ENCODE measurements at regions of chr12 and their contacts with region 1.

Region 1: GRCh38 chr12:114166362-114166761 is 200.2 kb upstream of the RBM19 start:
- DNase-seq: no peak
- H3K4me3 ChIP-seq: no peak overlapping the region
- CTCF ChIP-seq: peak; percentile 22

Region 2: GRCh38 chr12:114152066-114152465 is 14.3 kb before region 1 on chr12:
- CTCF ChIA-PET with region 1: no interaction called
- POLR2A ChIA-PET with region 1: no interaction called
- DNase-seq: no peak
- H3K4me3 ChIP-seq: no peak overlapping the region
- CTCF ChIP-seq: no peak

Region 3: GRCh38 chr12:114476159-114476558 is 309.8 kb after region 1 on chr12:
- CTCF ChIA-PET with region 1: interaction called, 31 read pairs
- POLR2A ChIA-PET with region 1: no interaction called
- DNase-seq: no peak
- H3K4me3 ChIP-seq: no peak overlapping the region
- CTCF ChIP-seq: no peak

Measured in AG04449 (cell line).